T-cell (primary cell): ENCODE measurements at regions of chr1 and their contacts with region 1.

Region 1: DNA sequence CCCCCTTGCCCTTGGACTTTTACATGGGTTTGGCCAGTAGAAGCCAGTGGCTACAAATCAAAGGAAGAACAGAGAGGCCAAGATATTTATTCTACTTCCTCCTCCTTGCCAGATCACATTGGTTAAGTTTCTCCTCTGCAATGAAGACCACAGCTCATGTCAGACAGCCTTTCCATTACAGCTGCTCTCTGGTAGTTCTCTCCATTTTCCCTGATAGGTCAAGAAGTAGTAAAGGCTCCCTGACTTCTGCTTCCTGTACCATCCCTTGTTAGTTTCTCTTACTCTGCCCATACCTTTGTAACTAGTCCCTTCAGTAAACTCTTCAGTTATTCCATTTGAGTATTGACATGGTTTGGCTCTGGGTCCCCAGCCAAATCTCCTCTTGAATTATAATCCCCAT is 27.8 kb downstream of the NME7 start:
- DNase-seq: no peak
- ATAC-seq: no peak
- H3K4me3 ChIP-seq: no peak overlapping the region
- H3K4me3 Mint-ChIP-seq: no peak overlapping the region
- H3K27ac ChIP-seq: no peak overlapping the region
- H3K27ac Mint-ChIP-seq: no peak overlapping the region
- H3K4me1 ChIP-seq: no peaks in the 10 kb centered on the region
- H3K4me1 Mint-ChIP-seq: peaks cover 14 to 29% (median 18%) of the 10 kb centered on the region in 3 donors
- H3K27me3 ChIP-seq: no peaks in the 10 kb centered on the region
- H3K27me3 Mint-ChIP-seq: no peaks in the 10 kb centered on the region

Region 2: DNA sequence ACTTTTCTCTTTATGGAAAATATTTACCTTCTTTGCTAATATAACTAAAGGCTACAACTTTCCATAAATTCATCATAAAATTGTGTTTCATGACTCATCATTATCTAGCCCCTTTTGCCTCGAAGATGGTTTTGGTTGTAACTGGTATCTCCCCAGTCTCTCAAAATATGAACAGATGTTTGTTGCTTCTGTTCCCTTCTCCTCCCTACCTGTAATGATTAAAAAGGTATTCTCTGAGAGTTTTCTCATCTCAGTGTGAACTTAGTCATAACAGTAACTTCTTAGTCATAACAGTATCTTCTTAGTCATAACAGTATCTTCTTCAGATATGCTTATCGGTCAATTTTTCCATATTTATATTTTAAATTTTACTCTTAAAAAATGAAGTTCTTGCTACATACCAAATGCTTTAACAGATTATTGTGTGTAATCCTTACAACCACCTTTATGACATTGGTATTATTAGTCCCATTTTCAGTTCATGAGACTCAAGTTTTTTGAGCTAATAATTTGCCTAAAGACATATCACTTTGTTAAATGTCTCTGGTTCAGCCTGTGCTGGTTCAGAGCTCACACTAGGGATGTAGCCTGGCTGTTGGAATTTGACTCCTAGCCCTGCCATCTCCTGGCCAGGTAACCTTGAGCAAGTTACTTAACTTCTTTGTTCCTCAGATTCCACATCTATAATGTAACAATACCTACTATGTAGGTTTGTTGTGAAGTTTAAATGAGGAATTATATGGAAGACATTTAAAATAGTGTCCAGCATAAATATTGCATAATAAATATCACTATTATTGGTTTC is 200.7 kb before region 1 on chr1:
- CTCF ChIA-PET with region 1: no interaction called
- POLR2A ChIA-PET with region 1: interaction called in 1 of 2 experiments, 13 read pairs
- DNase-seq: no peak
- ATAC-seq: no peak
- H3K4me3 ChIP-seq: no peak overlapping the region
- H3K4me3 Mint-ChIP-seq: no peak overlapping the region
- H3K27ac ChIP-seq: no peak overlapping the region
- H3K27ac Mint-ChIP-seq: no peak overlapping the region
- H3K4me1 ChIP-seq: no peaks in the 10 kb centered on the region
- H3K4me1 Mint-ChIP-seq: no peaks in the 10 kb centered on the region
- H3K27me3 ChIP-seq: no peaks in the 10 kb centered on the region
- H3K27me3 Mint-ChIP-seq: no peaks in the 10 kb centered on the region

Region 3: DNA sequence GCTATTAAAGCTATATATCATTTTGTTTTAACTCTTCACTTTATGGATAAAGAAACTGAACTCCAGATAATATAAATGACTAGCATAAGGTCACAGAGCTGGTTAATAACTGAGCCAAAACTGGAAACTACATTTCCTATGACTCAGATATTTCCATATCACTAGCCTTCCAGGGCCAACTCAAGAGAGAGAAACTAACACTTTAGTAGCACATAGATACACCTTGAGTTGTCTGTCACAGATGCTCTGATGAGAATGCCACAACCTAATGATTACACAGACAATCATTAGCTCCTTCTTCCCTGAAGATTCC is 12.9 kb before region 1 on chr1:
- CTCF ChIA-PET with region 1: no interaction called
- POLR2A ChIA-PET with region 1: no interaction called
- DNase-seq: no peak
- ATAC-seq: no peak
- H3K4me3 ChIP-seq: no peak overlapping the region
- H3K4me3 Mint-ChIP-seq: no peak overlapping the region
- H3K27ac ChIP-seq: no peak overlapping the region
- H3K27ac Mint-ChIP-seq: no peak overlapping the region
- H3K4me1 ChIP-seq: no peaks in the 10 kb centered on the region
- H3K4me1 Mint-ChIP-seq: peaks cover 2 to 11% (median 6%) of the 10 kb centered on the region in 3 donors
- H3K27me3 ChIP-seq: no peaks in the 10 kb centered on the region
- H3K27me3 Mint-ChIP-seq: no peaks in the 10 kb centered on the region